ENCODE measurements at regions of chr10 and their contacts with region 1.

Region 1: GRCh38 chr10:17428351-17429097 is 25.9 kb downstream of the ST8SIA6 start:
- DNase-seq: no peak
- H3K4me3 ChIP-seq: no peak overlapping the region
- H3K27ac ChIP-seq: no peak overlapping the region
- H3K4me1 ChIP-seq: no peaks in the 10 kb centered on the region
- H3K27me3 ChIP-seq: no peaks in the 10 kb centered on the region
- CTCF ChIP-seq: no peak

Region 2: GRCh38 chr10:16832351-16833080 is 596.0 kb before region 1 on chr10:
- intact Hi-C with region 1: loop called (anchors 10 kb)
- DNase-seq: no peak
- H3K4me3 ChIP-seq: no peak overlapping the region
- H3K27ac ChIP-seq: peak overlapping the region in 1 of 2 donors; percentile 48
- H3K4me1 ChIP-seq: peaks cover 0 to 6% (median 5%) of the 10 kb centered on the region in 3 donors
- H3K27me3 ChIP-seq: no peaks in the 10 kb centered on the region
- CTCF ChIP-seq: no peak